Prostate gland (tissue), 2 donors: ENCODE measurements at regions of chr4 and their contacts with region 1.

Region 1: GRCh38 chr4:73258686-73259570 is at the start of gene ANKRD17:
- DNase-seq: peak; percentile 90
- H3K4me3 ChIP-seq: peak within 1 kb of the TSS; percentile 83 to 91
- H3K27ac ChIP-seq: peak within 1 kb of the TSS; percentile 99
- H3K4me1 ChIP-seq: no peaks in the 10 kb centered on the region
- H3K27me3 ChIP-seq: no peaks in the 10 kb centered on the region
- CTCF ChIP-seq: peak in 3 of 4 experiments; percentile 10 to 57 (median 56)
- POLR2A ChIP-seq: peak; percentile 68
- total RNA-seq, gene ANKRD17: 63.3 to 65.0 TPM

Region 2: GRCh38 chr4:73069338-73070073 is 189.4 kb before region 1 on chr4 and contains the start of gene COX18:
- intact Hi-C with region 1: loop called (anchors 1 kb)
- DNase-seq: peak; percentile 97
- H3K4me3 ChIP-seq: peak within 1 kb of the TSS; percentile 85 to 90
- H3K27ac ChIP-seq: peak within 1 kb of the TSS; percentile 89 to 91
- H3K4me1 ChIP-seq: no peaks in the 10 kb centered on the region
- H3K27me3 ChIP-seq: no peaks in the 10 kb centered on the region
- CTCF ChIP-seq: peak in 2 of 4 experiments; percentile 11 to 35
- POLR2A ChIP-seq: peak; percentile 84
- total RNA-seq, gene COX18: 31.3 to 47.4 TPM

Region 3: GRCh38 chr4:73127839-73128453 is 131.0 kb before region 1 on chr4:
- intact Hi-C with region 1: loop called (anchors 10 kb)
- DNase-seq: no peak
- H3K4me3 ChIP-seq: no peak overlapping the region
- H3K27ac ChIP-seq: no peak overlapping the region
- H3K4me1 ChIP-seq: no peaks in the 10 kb centered on the region
- H3K27me3 ChIP-seq: no peaks in the 10 kb centered on the region
- CTCF ChIP-seq: no peak
- POLR2A ChIP-seq: no peak

Region 4: GRCh38 chr4:73193155-73193554 is 65.8 kb before region 1 on chr4:
- intact Hi-C with region 1: no loop called
- DNase-seq: no peak
- H3K4me3 ChIP-seq: no peak overlapping the region
- H3K27ac ChIP-seq: no peak overlapping the region
- H3K4me1 ChIP-seq: no peaks in the 10 kb centered on the region
- H3K27me3 ChIP-seq: no peaks in the 10 kb centered on the region
- CTCF ChIP-seq: no peak
- POLR2A ChIP-seq: no peak

Region 5: GRCh38 chr4:73299548-73300280 is 40.8 kb after region 1 on chr4:
- intact Hi-C with region 1: no loop called
- DNase-seq: no peak
- H3K4me3 ChIP-seq: no peak overlapping the region
- H3K27ac ChIP-seq: no peak overlapping the region
- H3K4me1 ChIP-seq: no peaks in the 10 kb centered on the region
- H3K27me3 ChIP-seq: no peaks in the 10 kb centered on the region
- CTCF ChIP-seq: no peak
- POLR2A ChIP-seq: no peak

Region 6: DNA sequence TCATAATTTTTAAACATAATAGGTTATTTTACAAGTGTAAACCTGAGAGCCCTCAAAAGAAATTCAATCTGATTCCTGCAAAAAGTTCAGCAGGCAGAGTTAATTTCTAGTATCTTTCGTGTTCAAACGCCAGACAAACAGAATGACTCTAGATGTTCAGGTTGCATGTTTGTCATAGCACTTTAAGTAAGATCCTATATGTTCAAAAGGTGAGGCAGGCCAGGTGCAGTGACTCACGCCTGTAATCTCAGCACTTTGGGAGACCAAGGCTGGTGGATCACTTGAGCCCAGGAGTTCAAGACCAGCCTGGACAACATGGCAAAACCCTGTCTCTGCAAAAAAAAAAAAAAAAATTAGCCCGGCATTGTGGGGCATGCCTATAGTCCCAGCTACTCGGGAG is 362.4 kb after region 1 on chr4:
- intact Hi-C with region 1: no loop called
- DNase-seq: no peak
- H3K4me3 ChIP-seq: no peak overlapping the region
- H3K27ac ChIP-seq: no peak overlapping the region
- H3K4me1 ChIP-seq: peaks cover 2% of the 10 kb centered on the region
- H3K27me3 ChIP-seq: no peaks in the 10 kb centered on the region
- CTCF ChIP-seq: no peak
- POLR2A ChIP-seq: no peak

Region 7: GRCh38 chr4:74543231-74543670 is 1284.3 kb after region 1 on chr4:
- intact Hi-C with region 1: no loop called
- DNase-seq: no peak
- H3K4me3 ChIP-seq: no peak overlapping the region
- H3K27ac ChIP-seq: no peak overlapping the region
- H3K4me1 ChIP-seq: no peaks in the 10 kb centered on the region
- H3K27me3 ChIP-seq: no peaks in the 10 kb centered on the region
- CTCF ChIP-seq: no peak
- POLR2A ChIP-seq: no peak